ENCODE measurements at regions of chrX and their contacts with region 1.

Region 1: DNA sequence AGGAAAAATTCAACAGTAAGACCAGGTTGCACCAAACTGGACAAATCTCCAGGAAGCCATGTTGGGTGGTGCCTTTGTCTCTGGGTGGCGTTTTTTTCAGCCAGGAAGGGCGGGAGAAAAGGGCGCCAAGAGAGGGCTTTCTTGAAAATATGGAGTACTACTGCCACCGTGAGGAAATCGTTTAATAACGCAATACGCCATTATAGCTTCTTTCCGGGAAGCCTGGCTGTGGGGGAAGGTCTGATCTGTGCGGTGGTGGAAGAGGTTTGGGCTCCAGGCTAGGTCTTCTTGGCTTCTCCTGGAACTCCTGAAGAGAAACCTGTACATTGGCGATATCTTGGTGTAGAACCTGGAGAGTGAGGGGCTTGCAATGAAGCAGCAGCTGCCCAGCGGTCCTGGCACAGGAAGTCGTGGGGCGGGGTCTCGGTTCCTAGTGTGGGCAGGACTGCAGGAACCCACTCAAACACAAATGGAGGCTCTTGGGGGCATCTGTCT is 202.6 kb downstream of the OR13H1 start:
- DNase-seq: peak; percentile 91
- ATAC-seq: peak; percentile 75
- H3K4me3 ChIP-seq: peak overlapping the region; percentile 72
- H3K27ac ChIP-seq: peak overlapping the region; percentile 59
- H3K4me1 ChIP-seq: peaks cover 10% of the 10 kb centered on the region
- H3K27me3 ChIP-seq: no peaks in the 10 kb centered on the region
- CTCF ChIP-seq: peak; percentile 58; the same call in 1 of the 2 replicates

Region 2: GRCh38 chrX:131710431-131711045 is 36.0 kb before region 1 on chrX:
- CTCF ChIA-PET with region 1: no interaction called
- POLR2A ChIA-PET with region 1: no interaction called
- intact Hi-C with region 1: loop called (anchors 2 kb)
- DNase-seq: no peak
- ATAC-seq: no peak
- H3K4me3 ChIP-seq: no peak overlapping the region
- H3K27ac ChIP-seq: no peak overlapping the region
- H3K4me1 ChIP-seq: no peaks in the 10 kb centered on the region
- H3K27me3 ChIP-seq: no peaks in the 10 kb centered on the region
- CTCF ChIP-seq: no peak

Measured in PC-3 (cell line).